Prostate gland (tissue), 2 donors: ENCODE measurements at regions of chr2 and their contacts with region 1.

Region 1: DNA sequence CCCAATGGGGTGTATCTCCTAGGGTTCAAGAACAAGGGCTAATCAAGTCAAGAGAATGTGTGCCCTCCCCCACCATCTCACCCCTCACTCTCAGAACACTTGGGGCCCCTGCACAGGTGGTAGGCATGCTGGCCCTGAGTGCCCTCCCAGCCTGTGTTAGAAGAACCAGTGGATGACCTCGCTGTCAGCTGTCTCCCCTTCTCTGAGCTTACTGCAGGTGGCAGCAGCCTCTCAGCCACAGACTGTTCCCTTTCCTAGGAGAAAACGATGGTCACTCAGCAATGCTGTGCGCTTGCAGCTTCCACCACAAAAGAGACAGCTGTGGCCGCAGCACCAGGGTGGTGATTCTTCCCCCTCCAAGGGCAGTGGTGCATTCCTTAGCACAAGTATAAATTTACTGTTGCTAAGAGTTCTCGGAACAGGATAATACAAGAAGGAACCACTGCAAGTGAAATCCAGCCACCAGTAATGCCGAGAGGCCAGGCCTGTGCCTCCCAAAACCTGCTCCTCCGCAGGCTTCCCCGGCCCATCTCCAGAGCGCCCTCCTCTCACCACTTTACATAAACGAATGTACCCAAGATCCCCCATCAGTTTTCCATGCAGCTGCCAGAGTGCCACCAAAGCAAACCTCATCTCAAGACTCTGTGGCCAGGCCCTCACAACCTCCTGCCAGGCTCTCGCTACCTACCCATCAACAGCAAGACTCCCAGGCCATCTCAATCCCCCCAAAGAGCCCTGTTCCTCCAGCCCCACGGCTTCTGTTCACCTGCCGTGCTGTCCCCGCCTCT is 935 bp upstream of the RAMP1 start:
- DNase-seq: peak; percentile 71
- H3K4me3 ChIP-seq: peak overlapping the region; percentile 48 to 58
- H3K27ac ChIP-seq: peak overlapping the region; percentile 76 to 78
- H3K4me1 ChIP-seq: peaks cover 3% of the 10 kb centered on the region
- H3K27me3 ChIP-seq: no peaks in the 10 kb centered on the region
- CTCF ChIP-seq: peak; percentile 22 to 88 (median 75)
- POLR2A ChIP-seq: no peak

Region 2: GRCh38 chr2:237540823-237541222 is 317.7 kb before region 1 on chr2:
- intact Hi-C with region 1: no loop called
- DNase-seq: peak; percentile 75
- H3K4me3 ChIP-seq: no peak overlapping the region
- H3K27ac ChIP-seq: peak overlapping the region; percentile 48 to 71
- H3K4me1 ChIP-seq: peaks cover 9% of the 10 kb centered on the region
- H3K27me3 ChIP-seq: no peaks in the 10 kb centered on the region
- CTCF ChIP-seq: no peak
- POLR2A ChIP-seq: no peak

Region 3: GRCh38 chr2:237558906-237559641 is 299.4 kb before region 1 on chr2:
- intact Hi-C with region 1: no loop called
- DNase-seq: peak; percentile 82
- H3K4me3 ChIP-seq: no peak overlapping the region
- H3K27ac ChIP-seq: peak overlapping the region in 1 of 2 donors; percentile 41
- H3K4me1 ChIP-seq: no peaks in the 10 kb centered on the region
- H3K27me3 ChIP-seq: no peaks in the 10 kb centered on the region
- CTCF ChIP-seq: peak in 2 of 4 experiments; percentile 13 to 18
- POLR2A ChIP-seq: no peak

Region 4: DNA sequence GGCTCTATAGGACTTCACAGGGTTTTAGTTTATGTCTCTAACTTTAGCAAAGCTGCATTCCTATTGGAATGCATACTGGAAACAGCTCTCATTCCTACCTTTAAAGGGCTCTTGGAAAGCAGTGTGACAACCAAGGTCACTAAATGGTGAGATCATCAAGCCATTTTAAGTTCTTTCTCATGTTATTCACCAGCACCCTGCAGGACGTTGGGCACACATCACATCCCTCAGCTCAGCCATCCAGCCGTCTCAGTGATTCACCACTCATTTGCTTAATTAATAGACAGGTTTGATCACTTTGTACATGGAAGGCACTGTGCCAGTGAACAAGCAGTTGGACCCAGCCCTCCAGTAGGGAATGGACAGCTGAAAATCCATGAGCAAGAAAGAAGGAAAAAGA is 92.1 kb before region 1 on chr2:
- intact Hi-C with region 1: no loop called
- DNase-seq: no peak
- H3K4me3 ChIP-seq: no peak overlapping the region
- H3K27ac ChIP-seq: no peak overlapping the region
- H3K4me1 ChIP-seq: no peaks in the 10 kb centered on the region
- H3K27me3 ChIP-seq: no peaks in the 10 kb centered on the region
- CTCF ChIP-seq: no peak
- POLR2A ChIP-seq: no peak

Region 5: GRCh38 chr2:237895544-237896506 is 37.3 kb after region 1 on chr2:
- intact Hi-C with region 1: loop called (anchors 5 kb)
- DNase-seq: peak; percentile 82
- H3K4me3 ChIP-seq: no peak overlapping the region
- H3K27ac ChIP-seq: peak overlapping the region; percentile 41 to 49
- H3K4me1 ChIP-seq: peaks cover 8% of the 10 kb centered on the region
- H3K27me3 ChIP-seq: no peaks in the 10 kb centered on the region
- CTCF ChIP-seq: no peak
- POLR2A ChIP-seq: no peak

Region 6: GRCh38 chr2:237923481-237924163 is 65.1 kb after region 1 on chr2:
- intact Hi-C with region 1: loop called (anchors 5 kb)
- DNase-seq: peak; percentile 23
- H3K4me3 ChIP-seq: peak overlapping the region in 1 of 2 donors; percentile 18
- H3K27ac ChIP-seq: peak overlapping the region in 1 of 2 donors; percentile 38
- H3K4me1 ChIP-seq: no peaks in the 10 kb centered on the region
- H3K27me3 ChIP-seq: no peaks in the 10 kb centered on the region
- CTCF ChIP-seq: peak; percentile 79 to 93 (median 86)
- POLR2A ChIP-seq: no peak

Region 7: DNA sequence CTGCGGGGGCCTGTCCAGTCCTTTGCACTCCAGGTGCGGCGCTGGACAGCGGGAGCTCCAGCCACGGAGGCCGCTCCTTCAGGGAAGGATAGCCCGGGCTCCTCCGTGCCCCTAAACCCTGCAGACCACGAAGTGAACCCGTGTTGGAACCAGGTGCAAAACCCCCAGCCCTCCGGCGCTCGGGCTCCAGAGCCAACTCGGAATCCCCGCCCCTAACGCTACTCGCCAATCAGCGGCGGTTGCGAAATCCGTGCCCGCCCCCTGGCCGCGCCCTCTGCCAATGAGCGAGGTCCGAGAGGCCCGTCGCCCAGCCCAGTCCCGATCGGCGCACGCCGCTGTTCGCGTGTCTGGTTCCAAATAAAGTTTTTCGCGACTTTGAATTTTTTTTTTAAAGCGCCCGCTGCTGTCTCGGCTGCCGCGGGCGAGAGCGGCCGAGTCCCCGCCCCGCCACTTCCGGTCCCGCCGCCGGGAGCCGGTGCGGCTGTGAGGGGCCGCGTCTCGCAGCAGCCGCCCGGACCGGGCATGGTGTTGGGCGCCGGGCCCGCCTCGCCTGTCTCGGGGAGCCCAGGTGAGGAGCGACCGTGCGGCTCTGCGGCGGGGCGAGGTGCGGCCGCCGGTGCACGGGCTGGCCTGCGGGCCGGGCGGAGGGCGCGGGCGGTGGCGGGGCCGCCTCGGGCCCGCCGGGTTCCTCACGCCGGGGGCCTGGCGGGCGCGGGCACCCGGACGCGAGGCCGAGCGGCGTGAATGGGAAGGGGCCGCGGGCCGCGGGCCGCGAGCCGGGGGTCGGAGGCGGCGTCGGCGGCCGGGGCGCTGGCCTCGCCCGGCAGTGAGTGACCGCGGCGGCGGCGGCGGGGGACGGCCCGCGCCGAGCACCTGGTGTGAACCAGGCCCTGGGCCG is 108.3 kb after region 1 on chr2 and contains the start of gene UBE2F:
- intact Hi-C with region 1: loop called (anchors 5 kb)
- DNase-seq: peak; percentile 97
- H3K4me3 ChIP-seq: peak within 1 kb of the TSS; percentile 46 to 61
- H3K27ac ChIP-seq: peak within 1 kb of the TSS; percentile 10 to 47
- H3K4me1 ChIP-seq: peaks cover 11% of the 10 kb centered on the region
- H3K27me3 ChIP-seq: no peaks in the 10 kb centered on the region
- CTCF ChIP-seq: peak in 1 of 4 experiments; percentile 19
- POLR2A ChIP-seq: peak; percentile 67
- total RNA-seq, gene UBE2F: 45.2 to 73.2 TPM

Region 8: GRCh38 chr2:238060542-238061314 is 202.2 kb after region 1 on chr2 and contains the start of gene SCLY:
- intact Hi-C with region 1: loop called (anchors 5 kb)
- DNase-seq: peak; percentile 96
- H3K4me3 ChIP-seq: peak within 1 kb of the TSS; percentile 88 to 92
- H3K27ac ChIP-seq: peak within 1 kb of the TSS; percentile 86
- H3K4me1 ChIP-seq: peaks cover 4% of the 10 kb centered on the region
- H3K27me3 ChIP-seq: no peaks in the 10 kb centered on the region
- CTCF ChIP-seq: peak in 1 of 4 experiments; percentile 39
- POLR2A ChIP-seq: peak; percentile 73
- total RNA-seq, gene SCLY: 11.5 to 16.1 TPM

Region 9: GRCh38 chr2:238160206-238161109 is 302.0 kb after region 1 on chr2:
- intact Hi-C with region 1: loop called (anchors 10 kb)
- DNase-seq: no peak
- H3K4me3 ChIP-seq: no peak overlapping the region
- H3K27ac ChIP-seq: no peak overlapping the region
- H3K4me1 ChIP-seq: no peaks in the 10 kb centered on the region
- H3K27me3 ChIP-seq: peaks cover 5% of the 10 kb centered on the region
- CTCF ChIP-seq: no peak
- POLR2A ChIP-seq: no peak

Region 10: GRCh38 chr2:238263204-238264071 is 404.9 kb after region 1 on chr2:
- intact Hi-C with region 1: loop called (anchors 1 kb)
- DNase-seq: peak; percentile 85
- H3K4me3 ChIP-seq: no peak overlapping the region
- H3K27ac ChIP-seq: peak overlapping the region; percentile 70 to 76
- H3K4me1 ChIP-seq: peaks cover 20% of the 10 kb centered on the region
- H3K27me3 ChIP-seq: no peaks in the 10 kb centered on the region
- CTCF ChIP-seq: peak; percentile 63 to 86 (median 83)
- POLR2A ChIP-seq: no peak